Posterior cingulate gyrus (tissue), 11 donors: ENCODE measurements at regions of chr3 and their contacts with region 1.

Region 1: DNA sequence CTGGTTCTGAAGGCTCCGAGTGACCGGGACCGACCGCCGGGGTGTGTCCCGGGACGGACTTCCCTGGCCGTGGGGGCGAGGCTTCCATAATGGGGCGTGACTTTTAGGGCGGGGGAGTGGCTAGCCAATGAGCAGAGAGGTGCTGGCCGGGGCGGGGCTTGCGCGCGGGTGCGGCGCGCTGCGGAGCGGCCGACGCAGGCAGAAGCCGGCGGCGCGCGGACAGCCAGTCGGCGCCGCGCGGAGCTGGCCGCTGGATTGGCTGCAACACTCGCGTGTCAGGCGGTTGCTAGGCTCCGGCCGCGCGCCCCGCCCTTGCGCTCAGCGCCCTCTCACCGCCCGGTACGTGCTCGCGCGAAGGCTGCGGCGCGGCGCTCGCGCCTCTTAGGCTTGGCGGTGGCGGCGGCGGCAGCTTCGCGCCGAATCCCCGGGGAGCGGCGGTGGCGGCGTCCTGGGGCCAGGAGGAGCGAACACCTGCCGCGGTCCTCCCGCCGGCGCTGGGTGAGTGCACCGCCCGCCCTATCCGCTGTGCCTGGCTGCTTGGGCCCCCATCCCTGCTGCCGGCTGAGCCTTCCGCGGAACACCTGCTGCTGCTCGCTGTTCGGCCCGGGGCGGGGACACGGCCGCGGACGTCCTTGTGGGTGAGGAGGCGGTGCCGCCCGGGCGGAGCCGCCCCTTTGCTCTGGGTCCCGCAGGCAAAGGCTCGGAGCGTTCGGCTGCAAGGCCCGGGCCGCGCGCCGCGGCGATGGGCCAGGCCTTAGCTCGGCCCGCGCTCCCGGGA is at the start of gene DAG1:
- DNase-seq: peak; percentile 93 to 99 (median 95)

Region 2: GRCh38 chr3:49434731-49435130 is 35.4 kb before region 1 on chr3:
- intact Hi-C with region 1: no loop called
- DNase-seq: no peak

Region 3: GRCh38 chr3:49519296-49519695 is 49.2 kb after region 1 on chr3:
- intact Hi-C with region 1: loop called (anchors 1 kb)
- DNase-seq: peak; percentile 47 to 96 (median 76)